Gastrocnemius medialis (tissue), 4 donors: ENCODE measurements at regions of chr12 and their contacts with region 1.

Region 1: DNA sequence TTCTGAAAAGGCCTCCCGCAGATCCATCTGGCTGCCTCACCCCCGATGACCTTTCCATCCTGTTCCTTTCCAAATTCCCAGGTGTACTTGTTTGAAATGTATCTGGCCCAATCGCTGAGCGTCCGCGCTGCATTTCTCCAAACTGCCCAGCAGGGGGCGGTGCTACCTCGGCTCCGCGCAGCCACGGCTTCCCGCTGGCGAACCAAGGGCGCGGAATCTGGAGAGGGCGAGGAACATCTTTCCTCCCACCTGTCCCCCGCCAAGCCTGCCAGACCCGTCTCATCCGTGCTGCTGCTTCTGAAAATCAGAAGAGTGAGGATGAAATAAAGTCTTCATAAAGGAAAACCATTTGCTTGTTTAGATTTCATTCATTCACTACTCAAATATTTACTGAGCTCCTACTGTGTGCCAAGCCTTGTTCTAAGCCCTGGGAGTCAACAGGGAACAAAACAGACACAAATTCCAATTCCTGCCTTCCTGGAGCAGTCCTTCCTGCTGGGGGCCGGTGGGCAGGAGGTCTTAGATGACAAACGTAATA is 16.8 kb upstream of the MYL2 start:
- DNase-seq: peak in 1 of 2 donors; percentile 45
- ATAC-seq: peak; percentile 41 to 48
- H3K4me3 ChIP-seq: peak overlapping the region in 3 of 4 donors; percentile 17 to 33 (median 18)
- H3K27ac ChIP-seq: peak overlapping the region in 3 of 4 donors; percentile 49 to 82 (median 78)
- H3K4me1 ChIP-seq: peaks cover 7 to 20% of the 10 kb centered on the region in 2 donors
- H3K27me3 ChIP-seq: no peaks in the 10 kb centered on the region
- CTCF ChIP-seq: peak; percentile 75 to 92 (median 85)
- POLR2A ChIP-seq: no peak

Region 2: GRCh38 chr12:110920324-110920910 is 16.8 kb before region 1 on chr12 and contains the start of gene MYL2:
- in situ Hi-C with region 1: no loop called
- intact Hi-C with region 1: loop called (anchors 1 kb)
- DNase-seq: peak in 1 of 2 donors; percentile 71
- ATAC-seq: peak; percentile 42 to 76
- H3K4me3 ChIP-seq: peak within 1 kb of the TSS in 2 of 4 donors; percentile 10 to 23
- H3K27ac ChIP-seq: peak within 1 kb of the TSS; percentile 70 to 86 (median 74)
- H3K4me1 ChIP-seq: peaks cover 4 to 28% of the 10 kb centered on the region in 2 donors
- H3K27me3 ChIP-seq: no peaks in the 10 kb centered on the region
- CTCF ChIP-seq: no peak
- POLR2A ChIP-seq: no peak
- total RNA-seq, gene MYL2: 817 to 5,649 (median 2,775) TPM

Region 3: GRCh38 chr12:111143271-111143670 is 206.1 kb after region 1 on chr12:
- in situ Hi-C with region 1: no loop called
- intact Hi-C with region 1: no loop called
- DNase-seq: no peak
- ATAC-seq: no peak
- H3K4me3 ChIP-seq: no peak overlapping the region
- H3K27ac ChIP-seq: no peak overlapping the region
- H3K4me1 ChIP-seq: no peaks in the 10 kb centered on the region
- H3K27me3 ChIP-seq: no peaks in the 10 kb centered on the region
- CTCF ChIP-seq: no peak
- POLR2A ChIP-seq: no peak

Region 4: DNA sequence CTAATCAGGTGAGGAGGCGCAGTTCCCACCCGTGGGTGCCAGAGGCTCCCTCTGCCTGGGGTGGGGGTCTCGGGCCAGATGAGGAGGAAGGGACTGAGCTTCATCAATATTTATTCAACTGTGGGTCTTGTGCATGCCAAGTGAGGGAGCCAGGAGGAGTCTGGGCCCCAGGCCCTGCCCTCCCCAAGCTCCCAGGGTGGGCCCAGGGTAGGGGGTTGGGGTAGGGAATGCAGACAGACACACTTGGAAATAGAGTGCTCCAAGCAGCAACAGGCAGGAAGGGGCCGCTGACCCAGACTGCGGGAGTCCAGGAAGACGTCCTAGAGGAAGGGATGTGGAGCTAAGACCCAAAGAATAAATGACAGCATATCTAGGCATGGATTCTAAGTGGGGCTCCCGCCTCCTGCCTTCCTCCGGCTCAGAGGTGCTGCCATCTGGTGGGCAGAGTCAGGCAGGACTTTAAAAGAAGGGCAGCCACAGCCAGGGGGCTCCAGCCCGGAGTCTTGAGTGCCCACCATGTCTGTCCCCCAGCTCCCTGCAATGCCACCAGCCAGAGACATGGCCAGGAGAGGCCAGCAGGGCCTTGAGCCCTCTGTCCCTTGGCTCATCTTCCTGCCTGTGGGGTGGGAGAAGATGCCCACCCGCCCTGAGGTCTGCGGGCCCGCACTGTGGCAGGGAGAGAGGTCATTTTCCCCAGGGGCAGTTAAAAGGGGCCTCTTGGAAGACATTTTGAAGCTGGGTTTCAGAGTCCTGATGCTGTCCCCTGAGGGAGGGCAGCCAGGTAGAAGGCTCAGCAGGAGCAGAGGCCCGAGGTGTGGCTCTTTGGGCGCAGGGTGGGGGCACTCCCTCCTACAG is 361.6 kb after region 1 on chr12:
- in situ Hi-C with region 1: loop called in 1 of 4 experiments (anchors 25 kb)
- intact Hi-C with region 1: loop called (anchors 1 kb)
- DNase-seq: peak in 1 of 2 donors; percentile 14
- ATAC-seq: peak in 1 of 2 donors; percentile 53
- H3K4me3 ChIP-seq: no peak overlapping the region
- H3K27ac ChIP-seq: no peak overlapping the region
- H3K4me1 ChIP-seq: no peaks in the 10 kb centered on the region
- H3K27me3 ChIP-seq: no peaks in the 10 kb centered on the region
- CTCF ChIP-seq: peak; percentile 43 to 75 (median 60)
- POLR2A ChIP-seq: no peak

Region 5: DNA sequence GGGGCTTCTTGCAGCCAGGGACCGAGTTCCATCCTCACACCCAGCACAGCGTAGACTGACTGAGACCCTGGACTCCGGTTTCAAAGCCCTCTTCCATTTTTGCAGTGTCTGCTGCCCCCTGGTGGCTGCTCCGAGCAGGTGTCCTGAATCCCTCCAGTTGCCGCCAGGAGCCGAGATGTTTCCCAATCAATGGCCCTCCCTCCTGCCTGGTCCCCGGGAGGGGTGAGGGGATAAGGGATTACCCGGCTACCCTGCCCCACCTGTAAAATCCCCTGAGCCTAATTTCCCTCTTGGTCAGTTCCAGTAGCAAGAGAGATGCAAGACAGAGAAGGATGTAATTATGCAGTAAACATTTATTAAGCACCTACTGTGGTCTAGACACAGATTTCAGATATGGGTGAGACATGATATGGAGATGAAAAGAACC is 376.7 kb after region 1 on chr12:
- in situ Hi-C with region 1: loop called in 3 of 4 experiments (anchors 10 to 25 kb)
- intact Hi-C with region 1: loop called (anchors 5 kb)
- DNase-seq: peak; percentile 50 to 52
- ATAC-seq: peak; percentile 64 to 80
- H3K4me3 ChIP-seq: peak overlapping the region in 1 of 4 donors; percentile 1
- H3K27ac ChIP-seq: no peak overlapping the region
- H3K4me1 ChIP-seq: no peaks in the 10 kb centered on the region
- H3K27me3 ChIP-seq: peaks cover 2 to 8% (median 5%) of the 10 kb centered on the region in 3 donors
- CTCF ChIP-seq: peak; percentile 36 to 91 (median 85)
- POLR2A ChIP-seq: no peak

Region 6: GRCh38 chr12:112684742-112685141 is 1747.6 kb after region 1 on chr12:
- in situ Hi-C with region 1: no loop called
- intact Hi-C with region 1: no loop called
- DNase-seq: no peak
- ATAC-seq: no peak
- H3K4me3 ChIP-seq: no peak overlapping the region
- H3K27ac ChIP-seq: no peak overlapping the region
- H3K4me1 ChIP-seq: no peaks in the 10 kb centered on the region
- H3K27me3 ChIP-seq: no peaks in the 10 kb centered on the region
- CTCF ChIP-seq: no peak
- POLR2A ChIP-seq: no peak